Mammary epithelial cell (primary cell): ENCODE measurements at regions of chr5 and their contacts with region 1.

Region 1: DNA sequence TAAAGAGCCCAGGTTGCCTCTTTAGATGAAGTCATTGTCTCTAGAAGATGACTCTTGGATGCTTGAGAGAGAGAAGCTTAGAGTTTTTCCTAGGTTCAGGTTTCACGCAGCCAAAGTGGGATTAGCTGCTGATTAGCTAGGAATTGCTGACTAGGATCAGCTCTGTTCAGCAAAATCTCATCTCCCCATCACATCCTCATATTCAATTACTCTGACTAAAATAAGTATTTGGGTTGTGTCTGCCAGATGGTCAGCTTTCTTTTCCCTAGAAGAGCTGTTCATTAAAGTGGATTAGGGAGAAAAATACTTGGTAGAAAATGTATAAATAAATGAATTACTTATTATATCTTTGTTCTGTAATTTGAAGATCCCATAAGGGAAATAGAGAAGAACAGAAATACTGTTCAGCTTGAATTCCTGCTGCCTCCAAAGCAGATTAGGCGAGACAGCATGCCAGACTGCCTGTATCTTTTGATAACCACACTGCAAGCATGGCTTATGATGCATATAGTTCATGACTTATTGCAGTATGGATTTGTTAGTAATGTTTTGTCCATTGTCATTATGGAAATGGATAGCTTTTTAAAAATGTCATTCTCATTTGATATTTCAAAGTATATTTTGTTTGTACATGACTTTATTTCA is 184.8 kb upstream of the CD180 start:
- DNase-seq: no peak
- H3K4me3 ChIP-seq: no peak overlapping the region
- H3K27ac ChIP-seq: no peak overlapping the region
- H3K4me1 ChIP-seq: no peaks in the 10 kb centered on the region
- H3K27me3 ChIP-seq: no peaks in the 10 kb centered on the region
- CTCF ChIP-seq: no peak

Region 2: GRCh38 chr5:67133776-67134175 is 247.6 kb before region 1 on chr5:
- CTCF ChIA-PET with region 1: no interaction called
- dilution Hi-C with region 1: no loop called
- in situ Hi-C with region 1: no loop called
- intact Hi-C with region 1: no loop called
- DNase-seq: no peak
- H3K4me3 ChIP-seq: no peak overlapping the region
- H3K27ac ChIP-seq: no peak overlapping the region
- H3K4me1 ChIP-seq: no peaks in the 10 kb centered on the region
- H3K27me3 ChIP-seq: no peaks in the 10 kb centered on the region
- CTCF ChIP-seq: no peak

Region 3: DNA sequence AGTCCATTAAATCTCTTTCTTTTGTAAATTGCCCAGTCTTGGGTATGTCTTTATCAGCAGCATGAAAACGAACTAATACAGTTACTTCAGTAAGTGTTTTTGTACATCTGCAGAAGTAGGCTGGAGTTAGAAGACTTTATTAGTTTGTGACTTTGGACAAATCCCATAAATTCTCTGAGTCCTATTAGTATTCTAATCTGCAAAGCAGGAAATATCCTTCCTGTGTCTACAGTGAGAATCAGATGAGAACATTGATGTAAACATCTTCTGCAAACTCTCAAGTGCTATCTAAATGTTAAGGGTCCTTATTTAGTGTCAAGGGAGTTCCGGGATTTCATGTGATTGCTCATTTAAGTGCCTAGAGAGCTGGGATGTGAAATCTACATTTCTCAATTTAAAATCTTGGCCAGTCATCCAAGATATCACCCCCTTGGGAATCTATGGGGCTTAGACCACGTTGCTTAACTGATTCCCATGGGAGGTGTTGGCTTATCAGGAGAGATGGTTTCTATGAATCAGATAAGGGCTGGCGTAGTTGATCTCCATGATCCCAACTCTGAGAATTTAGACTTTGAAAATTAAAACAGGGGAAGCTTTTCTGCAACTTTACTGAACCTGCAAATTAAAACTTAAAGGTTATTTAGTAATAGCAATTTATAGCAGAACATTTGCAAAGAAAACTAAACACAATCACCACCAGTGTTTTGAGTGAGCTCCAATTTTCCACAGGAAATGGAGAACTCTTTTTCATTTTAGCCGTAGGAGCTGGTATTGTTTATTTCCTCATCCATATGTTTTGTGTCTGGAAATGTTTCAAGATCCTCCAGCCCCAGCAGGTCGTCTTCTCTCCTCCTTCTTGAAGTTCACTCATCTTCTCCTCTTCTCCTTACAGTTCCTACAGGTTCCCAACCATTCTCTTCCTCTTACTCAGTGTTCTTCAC is 56.8 kb after region 1 on chr5:
- CTCF ChIA-PET with region 1: no interaction called
- dilution Hi-C with region 1: loop called (anchors 10 kb)
- in situ Hi-C with region 1: no loop called
- intact Hi-C with region 1: no loop called
- DNase-seq: no peak
- H3K4me3 ChIP-seq: no peak overlapping the region
- H3K27ac ChIP-seq: no peak overlapping the region
- H3K4me1 ChIP-seq: no peaks in the 10 kb centered on the region
- H3K27me3 ChIP-seq: no peaks in the 10 kb centered on the region
- CTCF ChIP-seq: no peak